K562 (cell line): ENCODE measurements at regions of chr2 and their contacts with region 1.

Region 1: GRCh38 chr2:19887510-19887909 is 14.3 kb downstream of the TTC32 start:
- DNase-seq: no peak
- ATAC-seq: no peak
- H3K4me3 ChIP-seq: no peak overlapping the region
- H3K27ac ChIP-seq: no peak overlapping the region
- H3K4me1 ChIP-seq: peaks cover 2 to 4% of the 10 kb centered on the region in 2 experiments; a peak in 3 of 5 replicates
- H3K27me3 ChIP-seq: no peaks in the 10 kb centered on the region
- CTCF ChIP-seq: no peak
- EP300 ChIP-seq: no peak
- POLR2A ChIP-seq: no peak
- RAD21 ChIP-seq: no peak

Region 2: DNA sequence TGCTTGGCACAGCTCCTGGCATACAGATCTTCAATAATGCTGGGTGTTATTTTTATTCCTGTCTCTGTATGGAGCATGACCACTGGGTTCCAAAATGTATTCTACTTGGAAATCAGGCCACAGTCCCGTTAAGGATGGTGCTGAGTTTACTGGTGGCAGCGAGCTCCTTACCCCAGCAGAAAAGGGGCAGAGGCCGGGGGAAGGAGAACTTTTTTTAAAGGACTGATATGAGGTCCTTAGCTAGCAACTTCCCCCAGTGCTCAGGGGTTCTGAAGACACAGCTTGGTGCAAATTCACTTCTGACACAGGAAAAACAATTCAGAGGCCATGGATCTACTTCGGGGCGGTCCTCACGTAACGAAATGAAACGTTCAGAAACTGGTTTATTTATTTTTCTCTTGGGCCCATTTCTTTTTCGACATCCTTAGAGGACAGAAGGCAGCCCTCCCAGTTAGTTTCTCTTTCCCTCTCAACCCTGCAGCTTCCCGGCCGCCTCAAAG is 1327.9 kb before region 1 on chr2:
- CTCF ChIA-PET with region 1: no interaction called
- POLR2A ChIA-PET with region 1: no interaction called
- in situ Hi-C with region 1: no loop called
- intact Hi-C with region 1: loop called (anchors 10 kb)
- DNase-seq: peak in 1 of 4 experiments; percentile 19
- ATAC-seq: no peak; the same call in none of the 3 replicates
- H3K4me3 ChIP-seq: peak overlapping the region; percentile 92
- H3K27ac ChIP-seq: peak overlapping the region; percentile 83
- H3K4me1 ChIP-seq: peaks cover 9 to 15% of the 10 kb centered on the region in 2 experiments; a peak in 3 of 5 replicates
- H3K27me3 ChIP-seq: no peaks in the 10 kb centered on the region
- CTCF ChIP-seq: no peak
- EP300 ChIP-seq: no peak
- POLR2A ChIP-seq: no peak
- RAD21 ChIP-seq: no peak

Region 3: DNA sequence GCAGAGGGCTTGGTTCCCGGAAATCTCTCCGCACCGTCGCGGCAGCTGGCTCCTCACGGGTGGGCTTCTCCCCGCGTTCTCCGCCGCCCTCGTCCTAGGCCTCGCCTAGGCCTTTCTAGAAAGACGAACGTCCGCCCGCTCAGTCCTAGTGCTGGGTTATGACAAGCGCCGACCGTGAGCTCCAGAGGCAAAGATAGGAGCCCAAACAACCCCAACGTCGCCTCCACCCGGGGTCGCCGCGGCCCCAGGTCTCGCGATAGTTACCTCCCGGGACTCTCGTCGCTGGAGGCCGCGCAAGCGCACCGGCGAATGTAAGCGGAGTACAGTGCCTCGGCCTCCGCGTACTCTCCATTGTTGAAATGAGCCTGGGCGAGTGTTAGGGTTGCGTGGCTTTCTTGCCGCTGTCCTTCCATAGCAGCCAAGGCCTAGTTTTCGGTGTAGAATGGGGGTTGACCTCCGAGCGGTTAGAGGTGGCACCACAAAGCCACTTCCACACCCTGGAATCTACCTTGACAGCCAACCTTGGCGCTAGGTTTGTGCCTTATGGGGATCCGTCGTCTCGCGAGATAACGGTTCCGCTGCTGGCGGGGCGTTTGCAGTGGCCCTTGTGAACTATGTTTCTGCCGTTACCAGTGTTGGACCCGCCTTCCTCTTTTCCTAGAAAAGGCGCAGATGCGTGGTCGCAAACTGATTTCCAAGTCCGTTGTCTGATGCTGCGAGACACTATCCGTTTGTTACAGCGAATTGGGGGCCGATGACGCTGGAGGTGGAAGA is 14.1 kb after region 1 on chr2 and contains the start of gene TTC32:
- CTCF ChIA-PET with region 1: no interaction called
- POLR2A ChIA-PET with region 1: interaction called, 13 read pairs
- in situ Hi-C with region 1: no loop called
- intact Hi-C with region 1: no loop called
- DNase-seq: peak; percentile 96 to 97 (median 96)
- ATAC-seq: peak; percentile 77
- H3K4me3 ChIP-seq: peak within 1 kb of the TSS; percentile 68
- H3K27ac ChIP-seq: peak within 1 kb of the TSS; percentile 99
- H3K4me1 ChIP-seq: peaks cover 10 to 12% of the 10 kb centered on the region in 2 experiments; a peak in 4 of 5 replicates
- H3K27me3 ChIP-seq: no peaks in the 10 kb centered on the region
- CTCF ChIP-seq: peak in 2 of 3 experiments; percentile 13 to 28; a peak in 2 of 6 replicates
- EP300 ChIP-seq: peak; percentile 91
- POLR2A ChIP-seq: peak; percentile 96
- RAD21 ChIP-seq: no peak
- polyA plus RNA-seq, gene TTC32: 55.0 to 66.5 TPM